AG04450 (cell line): ENCODE measurements at regions of chr4 and their contacts with region 1.

Region 1: GRCh38 chr4:125283707-125284279 is 31.0 kb upstream of the FAT4 start:
- DNase-seq: no peak
- H3K4me3 ChIP-seq: no peak overlapping the region
- H3K27ac ChIP-seq: no peak overlapping the region
- H3K27me3 ChIP-seq: no peaks in the 10 kb centered on the region
- CTCF ChIP-seq: peak; percentile 51

Region 2: GRCh38 chr4:124322234-124323065 is 961.3 kb before region 1 on chr4:
- CTCF ChIA-PET with region 1: interaction called, 13 read pairs
- POLR2A ChIA-PET with region 1: no interaction called
- DNase-seq: no peak
- H3K4me3 ChIP-seq: no peak overlapping the region
- H3K27ac ChIP-seq: no peak overlapping the region
- H3K27me3 ChIP-seq: peaks cover 3% of the 10 kb centered on the region
- CTCF ChIP-seq: peak; percentile 54

Region 3: GRCh38 chr4:124343661-124344171 is 940.1 kb before region 1 on chr4:
- CTCF ChIA-PET with region 1: interaction called, 10 read pairs
- POLR2A ChIA-PET with region 1: no interaction called
- DNase-seq: no peak
- H3K4me3 ChIP-seq: no peak overlapping the region
- H3K27ac ChIP-seq: no peak overlapping the region
- H3K27me3 ChIP-seq: no peaks in the 10 kb centered on the region
- CTCF ChIP-seq: no peak

Region 4: GRCh38 chr4:125082729-125083417 is 200.9 kb before region 1 on chr4:
- CTCF ChIA-PET with region 1: no interaction called
- POLR2A ChIA-PET with region 1: no interaction called
- DNase-seq: no peak
- H3K4me3 ChIP-seq: no peak overlapping the region
- H3K27ac ChIP-seq: no peak overlapping the region
- H3K27me3 ChIP-seq: no peaks in the 10 kb centered on the region
- CTCF ChIP-seq: no peak

Region 5: DNA sequence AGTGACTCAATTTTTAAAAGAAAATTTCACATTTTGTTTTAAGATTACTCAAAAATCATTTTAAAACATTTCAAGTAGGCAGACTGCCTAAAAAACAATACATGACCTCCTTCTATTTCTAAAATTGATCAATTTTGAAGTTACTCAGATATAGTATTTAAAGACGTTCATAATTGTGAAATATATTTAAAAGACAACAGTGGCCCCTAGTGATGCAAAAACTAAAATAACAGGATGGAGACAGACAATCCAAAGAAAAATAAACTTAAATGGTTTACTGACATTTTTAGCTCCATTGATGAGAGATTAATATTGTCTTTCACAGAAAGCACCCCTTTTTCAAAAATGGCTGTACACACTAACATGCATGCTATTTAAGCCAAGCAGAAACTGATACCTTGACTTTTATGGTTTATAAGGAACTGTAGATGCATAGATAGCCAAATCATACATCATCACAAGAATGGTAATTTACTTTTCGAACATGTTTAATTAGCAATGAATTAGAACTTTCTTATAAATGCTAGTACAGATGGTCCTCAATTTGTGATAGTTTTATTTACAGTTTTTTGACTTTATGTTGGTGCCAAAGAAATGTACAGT is 38.8 kb before region 1 on chr4:
- CTCF ChIA-PET with region 1: interaction called, 15 read pairs
- POLR2A ChIA-PET with region 1: no interaction called
- DNase-seq: no peak
- H3K4me3 ChIP-seq: no peak overlapping the region
- H3K27ac ChIP-seq: no peak overlapping the region
- H3K27me3 ChIP-seq: no peaks in the 10 kb centered on the region
- CTCF ChIP-seq: peak; percentile 43